ENCODE measurements at regions of chr1 and their contacts with region 1.

Region 1: GRCh38 chr1:87325982-87326738 is 2.5 kb upstream of the LMO4 start:
- DNase-seq: peak; percentile 78
- H3K4me3 ChIP-seq: no peak overlapping the region
- H3K27ac ChIP-seq: no peak overlapping the region
- H3K4me1 ChIP-seq: no peaks in the 10 kb centered on the region
- H3K27me3 ChIP-seq: no peaks in the 10 kb centered on the region
- CTCF ChIP-seq: peak; percentile 75

Region 2: DNA sequence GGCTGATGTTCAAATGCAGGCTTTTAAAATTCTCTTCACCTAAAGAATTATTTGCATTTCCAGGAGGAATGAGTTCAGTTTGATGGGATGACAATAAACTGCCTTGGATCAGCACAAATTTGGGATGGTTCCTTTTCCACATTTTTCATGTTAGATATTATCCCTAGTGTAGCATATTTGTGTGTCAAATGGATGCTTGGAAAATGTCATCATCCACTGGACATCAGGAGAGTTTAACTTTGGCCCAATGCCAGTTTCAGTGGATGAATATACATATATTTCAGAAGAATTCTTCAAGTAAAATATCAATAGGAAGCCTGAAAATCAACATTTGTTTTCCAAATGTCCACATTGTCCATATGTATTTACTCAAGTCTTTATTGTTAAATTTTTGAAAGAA is 1053.1 kb before region 1 on chr1:
- intact Hi-C with region 1: no loop called
- DNase-seq: no peak
- H3K4me3 ChIP-seq: no peak overlapping the region
- H3K27ac ChIP-seq: no peak overlapping the region
- H3K4me1 ChIP-seq: no peaks in the 10 kb centered on the region
- H3K27me3 ChIP-seq: no peaks in the 10 kb centered on the region
- CTCF ChIP-seq: no peak

Region 3: DNA sequence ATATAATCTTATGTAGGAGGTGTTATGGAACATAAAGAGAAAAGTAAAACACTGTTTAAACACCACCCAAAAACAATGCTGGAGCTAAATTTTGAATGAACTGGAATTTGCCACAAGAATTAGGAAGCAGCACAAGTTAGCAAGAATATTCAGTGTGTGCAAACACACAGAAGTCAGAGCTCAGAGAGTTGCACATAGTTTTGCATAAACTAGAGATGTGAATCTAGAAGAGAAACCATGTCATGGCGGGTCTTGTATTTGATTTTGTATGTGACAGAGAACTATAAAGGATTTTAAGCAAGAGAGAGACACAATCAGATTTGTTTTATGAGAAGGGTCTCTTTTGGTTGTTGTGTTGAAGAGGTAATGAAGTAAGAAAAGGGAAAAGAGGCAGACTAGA is 450.4 kb before region 1 on chr1:
- intact Hi-C with region 1: no loop called
- DNase-seq: no peak
- H3K4me3 ChIP-seq: no peak overlapping the region
- H3K27ac ChIP-seq: no peak overlapping the region
- H3K4me1 ChIP-seq: no peaks in the 10 kb centered on the region
- H3K27me3 ChIP-seq: no peaks in the 10 kb centered on the region
- CTCF ChIP-seq: no peak

Region 4: GRCh38 chr1:87953732-87954344 is 627.7 kb after region 1 on chr1:
- intact Hi-C with region 1: loop called (anchors 2 kb)
- DNase-seq: peak; percentile 73
- H3K4me3 ChIP-seq: no peak overlapping the region
- H3K27ac ChIP-seq: no peak overlapping the region
- H3K4me1 ChIP-seq: no peaks in the 10 kb centered on the region
- H3K27me3 ChIP-seq: no peaks in the 10 kb centered on the region
- CTCF ChIP-seq: peak; percentile 79